Activated T-helper 2 cell treated with anti-CD3 and anti-CD28 coated beads, Interferon-gamma antibody, Interleukin-2, Interleukin-4, amounts not matched to agents 10 μg/mL and 5 μg/mL and 100 μg/mL, durations not matched to agents 14 hours and 24 hours and 36 hours (primary cell): ENCODE measurements at regions of chr17 and their contacts with region 1.

Region 1: DNA sequence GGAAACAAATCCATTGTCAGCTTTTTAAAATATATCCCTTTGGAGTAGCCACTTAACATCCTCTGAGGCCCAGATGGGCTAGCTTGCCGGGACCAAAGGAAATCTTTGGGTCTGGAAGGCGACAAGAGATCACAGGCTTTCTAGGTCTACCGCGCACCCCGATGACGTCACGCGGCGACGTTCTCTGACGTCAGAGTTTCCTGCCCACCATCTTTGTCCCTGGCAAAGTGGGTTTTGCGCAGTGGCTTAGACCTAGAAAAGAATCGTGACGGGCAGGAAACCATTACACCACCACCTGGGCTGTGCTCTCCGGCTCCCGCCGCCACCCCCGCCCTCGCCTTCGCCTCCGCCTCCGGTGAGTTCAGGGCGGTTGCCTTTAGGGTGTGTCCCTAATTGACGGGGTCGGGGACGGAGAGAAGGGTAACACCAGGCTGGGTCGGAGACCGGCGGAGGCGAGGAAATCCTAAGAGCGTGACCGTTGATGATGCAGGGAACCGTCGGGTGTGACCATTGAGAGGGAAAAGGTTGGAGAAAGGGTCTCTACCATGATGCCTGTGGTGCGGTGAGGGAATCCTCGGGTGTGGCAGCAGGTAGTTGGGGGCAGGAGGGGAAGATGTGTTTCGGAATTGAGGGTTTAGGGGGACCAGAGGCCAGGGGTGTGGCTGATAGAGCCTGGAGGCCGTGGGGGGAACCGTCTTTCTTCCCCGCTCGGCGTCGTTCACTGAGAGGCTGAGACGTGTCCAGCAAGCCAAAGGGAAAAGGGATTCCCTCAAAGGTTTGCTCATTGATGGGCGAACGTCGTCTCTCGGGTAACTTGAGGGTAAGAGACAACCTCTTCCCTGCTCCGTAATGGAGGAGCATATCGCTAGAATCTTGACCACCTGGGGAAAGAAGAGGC is at the start of gene AP2B1:
- DNase-seq: peak; percentile 96
- H3K4me3 Mint-ChIP-seq: peak within 1 kb of the TSS; percentile 94
- H3K27ac Mint-ChIP-seq: peak within 1 kb of the TSS; percentile 96
- H3K4me1 Mint-ChIP-seq: peaks cover 30% of the 10 kb centered on the region
- H3K27me3 Mint-ChIP-seq: peaks cover 7% of the 10 kb centered on the region
- total RNA-seq, gene AP2B1: 177 and 194 TPM in 2 replicates

Region 2: GRCh38 chr17:35448214-35448898 is 139.0 kb before region 1 on chr17 and contains the start of gene SLFN13:
- intact Hi-C with region 1: loop called (anchors 10 kb)
- DNase-seq: peak; percentile 83
- H3K4me3 Mint-ChIP-seq: peak within 1 kb of the TSS; percentile 65
- H3K27ac Mint-ChIP-seq: peak within 1 kb of the TSS; percentile 79
- H3K4me1 Mint-ChIP-seq: peaks cover 16% of the 10 kb centered on the region
- H3K27me3 Mint-ChIP-seq: no peaks in the 10 kb centered on the region
- total RNA-seq, gene SLFN13: 41.9 and 42.6 TPM in 2 replicates

Region 3: DNA sequence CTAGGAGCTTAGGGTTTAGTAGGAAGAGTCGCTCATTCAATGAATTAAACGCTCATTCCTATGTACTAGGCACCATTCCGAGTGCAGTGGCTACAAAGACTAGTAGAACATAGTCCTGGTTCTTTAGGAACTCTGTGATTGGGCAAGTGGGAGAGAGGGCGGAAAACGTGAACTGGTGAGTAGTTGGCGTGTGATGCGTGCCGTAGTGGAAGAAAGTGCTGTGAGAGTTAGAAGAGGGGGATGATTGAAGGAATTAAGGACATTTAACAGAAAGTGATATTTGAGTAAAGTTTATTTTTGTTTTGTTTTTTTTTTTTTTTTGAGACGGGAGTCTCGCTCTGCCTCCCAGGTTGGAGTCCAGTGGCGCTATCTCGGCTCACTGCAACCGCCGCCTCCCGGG is 18.8 kb before region 1 on chr17:
- intact Hi-C with region 1: loop called (anchors 1 kb)
- DNase-seq: no peak
- H3K4me3 Mint-ChIP-seq: peak overlapping the region; percentile 87
- H3K27ac Mint-ChIP-seq: peak overlapping the region; percentile 80
- H3K4me1 Mint-ChIP-seq: peaks cover 18% of the 10 kb centered on the region
- H3K27me3 Mint-ChIP-seq: peaks cover 17% of the 10 kb centered on the region

Region 4: GRCh38 chr17:35808962-35809854 is 221.9 kb after region 1 on chr17 and contains the start of gene TAF15:
- intact Hi-C with region 1: loop called (anchors 5 kb)
- DNase-seq: peak; percentile 96
- H3K4me3 Mint-ChIP-seq: peak within 1 kb of the TSS; percentile 91
- H3K27ac Mint-ChIP-seq: peak within 1 kb of the TSS; percentile 97
- H3K4me1 Mint-ChIP-seq: peaks cover 34% of the 10 kb centered on the region
- H3K27me3 Mint-ChIP-seq: no peaks in the 10 kb centered on the region
- total RNA-seq, gene TAF15: 315 and 321 TPM in 2 replicates